Common myeloid progenitor, CD34-positive (primary cell): ENCODE measurements at regions of chrX and their contacts with region 1.

Region 1: GRCh38 chrX:129961180-129962083 is 21.0 kb upstream of the BCORL1 start:
- DNase-seq: peak; percentile 71 to 93 (median 88)
- H3K4me3 ChIP-seq: peak overlapping the region in 6 of 7 experiments; percentile 15 to 73 (median 45)
- H3K27ac ChIP-seq: peak overlapping the region; percentile 25 to 75
- H3K4me1 ChIP-seq: peaks cover 0 to 28% (median 16%) of the 10 kb centered on the region in 4 experiments
- H3K27me3 ChIP-seq: peaks cover 0 to 9% (median 0%) of the 10 kb centered on the region in 5 experiments

Region 2: GRCh38 chrX:129980001-129980401 is 18.6 kb after region 1 on chrX:
- CTCF ChIA-PET with region 1: interaction called, 20 read pairs
- POLR2A ChIA-PET with region 1: interaction called, 7 read pairs
- DNase-seq: peak; percentile 33 to 54 (median 43)
- H3K4me3 ChIP-seq: peak overlapping the region in 3 of 7 experiments; percentile 58 to 65 (median 64)
- H3K27ac ChIP-seq: no peak overlapping the region
- H3K4me1 ChIP-seq: peaks cover 3 to 32% (median 22%) of the 10 kb centered on the region in 4 experiments
- H3K27me3 ChIP-seq: no peaks in the 10 kb centered on the region